T-cell (primary cell): ENCODE measurements at regions of chr14 and their contacts with region 1.

Region 1: GRCh38 chr14:35425850-35426249 is 21.3 kb upstream of the NFKBIA start:
- DNase-seq: no peak
- ATAC-seq: no peak
- H3K4me3 ChIP-seq: no peak overlapping the region
- H3K4me3 Mint-ChIP-seq: no peak overlapping the region
- H3K27ac ChIP-seq: no peak overlapping the region
- H3K27ac Mint-ChIP-seq: no peak overlapping the region
- H3K4me1 ChIP-seq: peaks cover 2 to 4% of the 10 kb centered on the region in 2 experiments
- H3K4me1 Mint-ChIP-seq: peaks cover 5 to 8% (median 6%) of the 10 kb centered on the region in 3 donors
- H3K27me3 ChIP-seq: no peaks in the 10 kb centered on the region
- H3K27me3 Mint-ChIP-seq: no peaks in the 10 kb centered on the region

Region 2: GRCh38 chr14:35107866-35108265 is 318.0 kb before region 1 on chr14:
- CTCF ChIA-PET with region 1: no interaction called
- POLR2A ChIA-PET with region 1: interaction called in 1 of 2 experiments, 11 read pairs
- DNase-seq: no peak
- ATAC-seq: no peak
- H3K4me3 ChIP-seq: no peak overlapping the region
- H3K4me3 Mint-ChIP-seq: no peak overlapping the region
- H3K27ac ChIP-seq: no peak overlapping the region
- H3K27ac Mint-ChIP-seq: no peak overlapping the region
- H3K4me1 ChIP-seq: no peaks in the 10 kb centered on the region
- H3K4me1 Mint-ChIP-seq: peaks cover 1 to 11% (median 6%) of the 10 kb centered on the region in 3 donors
- H3K27me3 ChIP-seq: no peaks in the 10 kb centered on the region
- H3K27me3 Mint-ChIP-seq: no peaks in the 10 kb centered on the region

Region 3: GRCh38 chr14:35458442-35458841 is 32.6 kb after region 1 on chr14:
- CTCF ChIA-PET with region 1: no interaction called
- POLR2A ChIA-PET with region 1: no interaction called
- DNase-seq: no peak
- ATAC-seq: no peak
- H3K4me3 ChIP-seq: no peak overlapping the region
- H3K4me3 Mint-ChIP-seq: no peak overlapping the region
- H3K27ac ChIP-seq: no peak overlapping the region
- H3K27ac Mint-ChIP-seq: no peak overlapping the region
- H3K4me1 ChIP-seq: no peaks in the 10 kb centered on the region
- H3K4me1 Mint-ChIP-seq: no peaks in the 10 kb centered on the region
- H3K27me3 ChIP-seq: peaks cover 0 to 11% of the 10 kb centered on the region in 2 experiments
- H3K27me3 Mint-ChIP-seq: peaks cover 0 to 21% of the 10 kb centered on the region in 2 donors